CD4-positive, alpha-beta T cell (primary cell): ENCODE measurements at regions of chr18 and their contacts with region 1.

Region 1: DNA sequence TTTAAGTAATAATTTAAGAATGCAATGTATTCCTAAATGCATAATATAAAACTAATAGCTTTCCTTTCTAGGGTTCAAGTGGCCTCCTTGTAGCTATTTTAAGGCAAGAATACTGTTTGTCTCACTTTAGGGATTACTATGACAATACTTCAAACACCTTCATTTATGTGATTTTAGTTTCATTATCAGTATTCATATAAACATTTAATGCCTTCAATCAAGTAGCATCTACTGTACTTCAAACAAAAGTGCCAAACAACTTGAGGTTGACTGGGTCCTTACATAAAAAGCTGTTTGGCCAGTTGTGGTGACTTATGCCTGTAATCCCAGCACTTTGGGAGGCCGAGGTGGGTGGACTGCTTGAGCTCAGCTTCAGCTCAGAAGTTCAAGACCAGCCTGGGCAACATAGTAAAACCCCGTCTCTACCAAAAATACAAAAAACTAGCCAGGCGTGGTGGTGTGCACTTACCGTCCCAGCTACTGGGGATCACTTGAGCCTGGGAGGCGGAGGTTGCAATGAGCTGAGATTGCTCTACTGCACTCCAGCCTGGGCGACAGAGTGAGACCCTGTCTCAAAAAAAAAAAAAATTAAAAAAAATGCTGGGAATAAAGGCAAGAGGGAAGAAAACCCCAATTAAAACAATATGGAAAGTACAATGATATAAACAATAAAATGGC is 9.3 kb downstream of the MEX3C start:
- DNase-seq: peak in 1 of 14 experiments; percentile 32
- ATAC-seq: no peak
- H3K4me3 ChIP-seq: no peak overlapping the region
- H3K4me3 Mint-ChIP-seq: peak overlapping the region; percentile 45
- H3K27ac ChIP-seq: no peak overlapping the region
- H3K27ac Mint-ChIP-seq: peak overlapping the region; percentile 69
- H3K4me1 ChIP-seq: peaks cover 21% of the 10 kb centered on the region
- H3K4me1 Mint-ChIP-seq: peaks cover 79% of the 10 kb centered on the region
- H3K27me3 ChIP-seq: no peaks in the 10 kb centered on the region
- H3K27me3 Mint-ChIP-seq: no peaks in the 10 kb centered on the region
- CTCF ChIP-seq: no peak

Region 2: DNA sequence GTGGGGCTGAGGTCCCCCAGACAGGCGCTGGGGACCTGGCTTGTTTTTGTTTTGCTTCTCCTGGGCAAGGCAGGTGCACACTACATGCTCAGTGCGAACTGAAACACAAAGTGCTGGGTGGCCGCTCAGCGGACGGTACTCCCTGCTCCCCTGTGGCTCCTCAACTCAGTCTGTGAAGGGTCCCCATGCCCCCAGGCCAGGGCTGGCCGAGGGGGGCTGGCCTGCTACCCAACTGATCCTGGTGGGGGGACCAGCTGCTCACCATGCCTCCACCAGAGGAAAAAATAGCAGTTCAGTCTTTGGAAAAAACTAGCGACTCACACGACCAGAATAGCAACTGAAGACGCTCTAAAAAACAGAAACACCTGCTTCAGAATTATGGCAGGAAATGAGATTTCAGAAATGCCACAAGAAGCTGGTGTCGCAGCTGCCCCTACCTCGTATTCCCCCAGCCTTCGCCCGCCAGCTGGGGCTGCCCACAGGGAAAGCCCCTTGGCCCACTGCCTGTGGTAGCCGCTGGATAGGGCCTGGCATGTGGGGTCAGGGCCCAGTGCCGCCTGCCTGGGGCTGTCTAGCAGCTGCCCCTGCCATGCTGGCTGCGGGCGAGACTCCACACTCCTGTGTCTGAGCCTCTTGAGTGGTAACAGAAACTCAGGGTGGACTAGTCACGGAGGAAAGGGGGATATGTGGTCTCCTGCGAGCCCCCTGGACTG is 34.3 kb before region 1 on chr18:
- CTCF ChIA-PET with region 1: interaction called, 4 read pairs
- POLR2A ChIA-PET with region 1: interaction called, 6 read pairs
- intact Hi-C with region 1: loop called in 1 of 2 experiments (anchors 2 kb)
- DNase-seq: peak in 13 of 14 experiments; percentile 16 to 80 (median 29)
- ATAC-seq: peak; percentile 49
- H3K4me3 ChIP-seq: peak overlapping the region; percentile 48
- H3K4me3 Mint-ChIP-seq: peak overlapping the region; percentile 87
- H3K27ac ChIP-seq: peak overlapping the region; percentile 53 to 68
- H3K27ac Mint-ChIP-seq: peak overlapping the region; percentile 90
- H3K4me1 ChIP-seq: peaks cover 37% of the 10 kb centered on the region
- H3K4me1 Mint-ChIP-seq: peaks cover 40% of the 10 kb centered on the region
- H3K27me3 ChIP-seq: no peaks in the 10 kb centered on the region
- H3K27me3 Mint-ChIP-seq: no peaks in the 10 kb centered on the region
- CTCF ChIP-seq: no peak